Natural killer cell (primary cell): ENCODE measurements at regions of chr1 and their contacts with region 1.

Region 1: DNA sequence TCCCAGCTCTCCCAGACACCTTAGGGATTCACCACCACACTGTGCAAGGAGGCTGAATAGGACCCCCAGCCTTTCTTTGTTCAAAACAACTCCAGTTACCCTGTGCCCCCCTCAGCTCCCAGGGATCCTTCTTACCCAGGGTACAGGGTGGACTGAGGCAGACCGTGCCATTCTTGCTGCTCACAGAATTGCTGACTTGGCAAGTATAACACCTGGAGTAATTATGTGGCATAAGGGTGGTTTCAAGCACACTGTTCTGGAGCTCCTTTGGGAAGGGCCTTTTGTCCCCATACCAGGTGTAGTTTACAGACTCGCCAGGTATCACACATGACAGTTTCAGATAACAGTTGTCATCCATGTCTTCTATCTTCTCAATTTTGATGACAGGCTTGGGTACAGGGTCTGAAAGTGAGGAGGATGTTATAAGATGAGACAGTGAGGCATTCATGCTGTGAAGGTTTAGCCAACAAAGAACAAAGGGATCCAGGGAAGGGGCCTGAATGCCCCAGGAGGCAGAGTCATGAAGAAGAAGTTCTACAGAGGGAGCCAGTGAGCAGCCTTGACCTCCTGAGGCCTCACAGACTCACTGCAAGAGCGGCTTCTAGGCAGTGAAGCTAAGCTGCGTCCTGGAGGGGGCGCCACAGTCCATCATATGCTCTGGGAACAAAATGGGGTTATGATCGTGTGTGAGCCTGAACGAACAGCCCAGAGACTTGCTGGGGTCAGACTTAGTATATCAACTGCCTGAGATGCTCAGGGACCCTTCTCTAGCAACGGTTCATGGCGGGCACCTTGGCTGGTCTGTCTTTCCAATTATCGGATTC is 30.3 kb downstream of the CD48 start:
- DNase-seq: peak; percentile 83 to 95
- ATAC-seq: peak; percentile 79 to 92 (median 80)
- H3K4me3 ChIP-seq: no peak overlapping the region
- H3K4me3 Mint-ChIP-seq: peak overlapping the region; percentile 65
- H3K27ac ChIP-seq: peak overlapping the region; percentile 26
- H3K27ac Mint-ChIP-seq: peak overlapping the region; percentile 94 to 96
- H3K4me1 ChIP-seq: peaks cover 53% of the 10 kb centered on the region
- H3K4me1 Mint-ChIP-seq: peaks cover 61 to 71% of the 10 kb centered on the region in 2 donors
- H3K27me3 ChIP-seq: no peaks in the 10 kb centered on the region
- H3K27me3 Mint-ChIP-seq: no peaks in the 10 kb centered on the region
- CTCF ChIP-seq: peak; percentile 87

Region 2: GRCh38 chr1:160193091-160193819 is 488.0 kb before region 1 on chr1:
- intact Hi-C with region 1: no loop called
- DNase-seq: peak; percentile 78 to 89
- ATAC-seq: peak; percentile 85 to 99 (median 97)
- H3K4me3 ChIP-seq: no peak overlapping the region
- H3K4me3 Mint-ChIP-seq: no peak overlapping the region
- H3K27ac ChIP-seq: no peak overlapping the region
- H3K27ac Mint-ChIP-seq: no peak overlapping the region
- H3K4me1 ChIP-seq: peaks cover 7% of the 10 kb centered on the region
- H3K4me1 Mint-ChIP-seq: no peaks in the 10 kb centered on the region
- H3K27me3 ChIP-seq: no peaks in the 10 kb centered on the region
- H3K27me3 Mint-ChIP-seq: peaks cover 0 to 2% of the 10 kb centered on the region in 2 donors
- CTCF ChIP-seq: peak; percentile 88

Region 3: GRCh38 chr1:160711602-160712311 is 30.5 kb after region 1 on chr1 and contains the start of gene CD48:
- intact Hi-C with region 1: loop called (anchors 1 kb)
- DNase-seq: peak; percentile 41 to 83
- ATAC-seq: peak; percentile 33 to 54 (median 47)
- H3K4me3 ChIP-seq: peak within 1 kb of the TSS; percentile 80
- H3K4me3 Mint-ChIP-seq: no peak within 1 kb of the TSS
- H3K27ac ChIP-seq: peak within 1 kb of the TSS; percentile 94
- H3K27ac Mint-ChIP-seq: no peak within 1 kb of the TSS
- H3K4me1 ChIP-seq: peaks cover 53% of the 10 kb centered on the region
- H3K4me1 Mint-ChIP-seq: peaks cover 17 to 26% of the 10 kb centered on the region in 2 donors
- H3K27me3 ChIP-seq: no peaks in the 10 kb centered on the region
- H3K27me3 Mint-ChIP-seq: no peaks in the 10 kb centered on the region
- CTCF ChIP-seq: no peak
- total RNA-seq, gene CD48: 213 to 249 (median 223) TPM

Region 4: DNA sequence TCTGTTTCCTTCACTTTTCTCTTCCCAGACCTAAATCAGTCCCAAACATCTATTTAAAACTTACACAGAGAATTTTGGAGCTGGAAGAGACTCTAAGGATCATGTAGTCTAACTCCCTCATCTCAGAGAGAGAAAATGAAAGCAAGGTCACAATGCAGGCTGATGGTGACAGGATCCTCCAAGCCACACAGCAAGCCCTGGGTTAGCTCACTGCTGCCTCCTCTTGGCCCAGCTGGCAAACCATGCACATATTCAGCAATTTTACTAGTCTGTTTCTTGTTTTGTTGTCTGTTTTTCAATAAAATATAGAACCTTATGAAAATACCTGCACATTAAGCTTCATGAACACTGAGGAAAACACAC is 87.0 kb after region 1 on chr1:
- intact Hi-C with region 1: loop called (anchors 1 kb)
- DNase-seq: peak; percentile 77 to 95
- ATAC-seq: peak; percentile 88 to 98 (median 96)
- H3K4me3 ChIP-seq: peak overlapping the region; percentile 9
- H3K4me3 Mint-ChIP-seq: peak overlapping the region; percentile 97
- H3K27ac ChIP-seq: peak overlapping the region; percentile 83
- H3K27ac Mint-ChIP-seq: peak overlapping the region; percentile 98 to 99
- H3K4me1 ChIP-seq: peaks cover 17% of the 10 kb centered on the region
- H3K4me1 Mint-ChIP-seq: peaks cover 23 to 24% of the 10 kb centered on the region in 2 donors
- H3K27me3 ChIP-seq: no peaks in the 10 kb centered on the region
- H3K27me3 Mint-ChIP-seq: no peaks in the 10 kb centered on the region
- CTCF ChIP-seq: peak; percentile 91

Region 5: GRCh38 chr1:160830321-160831153 is 149.3 kb after region 1 on chr1:
- intact Hi-C with region 1: loop called (anchors 1 kb)
- DNase-seq: peak; percentile 43 to 84
- ATAC-seq: peak; percentile 57 to 75 (median 71)
- H3K4me3 ChIP-seq: no peak overlapping the region
- H3K4me3 Mint-ChIP-seq: no peak overlapping the region
- H3K27ac ChIP-seq: no peak overlapping the region
- H3K27ac Mint-ChIP-seq: peak overlapping the region; percentile 27 to 86
- H3K4me1 ChIP-seq: peaks cover 14% of the 10 kb centered on the region
- H3K4me1 Mint-ChIP-seq: peaks cover 47 to 50% of the 10 kb centered on the region in 2 donors
- H3K27me3 ChIP-seq: no peaks in the 10 kb centered on the region
- H3K27me3 Mint-ChIP-seq: no peaks in the 10 kb centered on the region
- CTCF ChIP-seq: peak; percentile 53

Region 6: GRCh38 chr1:160951443-160952128 is 270.3 kb after region 1 on chr1:
- intact Hi-C with region 1: loop called (anchors 1 kb)
- DNase-seq: peak; percentile 58 to 85
- ATAC-seq: peak; percentile 83 to 84 (median 84)
- H3K4me3 ChIP-seq: no peak overlapping the region
- H3K4me3 Mint-ChIP-seq: no peak overlapping the region
- H3K27ac ChIP-seq: no peak overlapping the region
- H3K27ac Mint-ChIP-seq: no peak overlapping the region
- H3K4me1 ChIP-seq: peaks cover 15% of the 10 kb centered on the region
- H3K4me1 Mint-ChIP-seq: peaks cover 27 to 30% of the 10 kb centered on the region in 2 donors
- H3K27me3 ChIP-seq: no peaks in the 10 kb centered on the region
- H3K27me3 Mint-ChIP-seq: peaks cover 2 to 15% of the 10 kb centered on the region in 2 donors
- CTCF ChIP-seq: peak; percentile 68